ENCODE measurements at regions of chr7 and their contacts with region 1.

Region 1: GRCh38 chr7:27172823-27173510 is 1.2 kb downstream of the HOXA10 start:
- DNase-seq: peak in 1 of 5 donors; percentile 46
- H3K4me3 ChIP-seq: peak overlapping the region; percentile 22
- H3K4me3 Mint-ChIP-seq: peak overlapping the region in 6 of 7 donors; percentile 56 to 86 (median 74)
- H3K27ac ChIP-seq: no peak overlapping the region
- H3K27ac Mint-ChIP-seq: peak overlapping the region in 2 of 8 donors; percentile 60 to 82
- H3K4me1 ChIP-seq: peaks cover 31% of the 10 kb centered on the region
- H3K4me1 Mint-ChIP-seq: peaks cover 19 to 33% (median 22%) of the 10 kb centered on the region in 3 donors
- H3K27me3 ChIP-seq: peaks cover 67% of the 10 kb centered on the region
- H3K27me3 Mint-ChIP-seq: peaks cover 63 to 74% of the 10 kb centered on the region in 2 donors

Region 2: GRCh38 chr7:27112955-27113949 is 59.7 kb before region 1 on chr7:
- CTCF ChIA-PET with region 1: no interaction called
- POLR2A ChIA-PET with region 1: no interaction called
- DNase-seq: no peak
- H3K4me3 ChIP-seq: no peak overlapping the region
- H3K4me3 Mint-ChIP-seq: no peak overlapping the region
- H3K27ac ChIP-seq: no peak overlapping the region
- H3K27ac Mint-ChIP-seq: no peak overlapping the region
- H3K4me1 ChIP-seq: no peaks in the 10 kb centered on the region
- H3K4me1 Mint-ChIP-seq: no peaks in the 10 kb centered on the region
- H3K27me3 ChIP-seq: no peaks in the 10 kb centered on the region
- H3K27me3 Mint-ChIP-seq: peaks cover 13 to 18% of the 10 kb centered on the region in 2 donors

Region 3: DNA sequence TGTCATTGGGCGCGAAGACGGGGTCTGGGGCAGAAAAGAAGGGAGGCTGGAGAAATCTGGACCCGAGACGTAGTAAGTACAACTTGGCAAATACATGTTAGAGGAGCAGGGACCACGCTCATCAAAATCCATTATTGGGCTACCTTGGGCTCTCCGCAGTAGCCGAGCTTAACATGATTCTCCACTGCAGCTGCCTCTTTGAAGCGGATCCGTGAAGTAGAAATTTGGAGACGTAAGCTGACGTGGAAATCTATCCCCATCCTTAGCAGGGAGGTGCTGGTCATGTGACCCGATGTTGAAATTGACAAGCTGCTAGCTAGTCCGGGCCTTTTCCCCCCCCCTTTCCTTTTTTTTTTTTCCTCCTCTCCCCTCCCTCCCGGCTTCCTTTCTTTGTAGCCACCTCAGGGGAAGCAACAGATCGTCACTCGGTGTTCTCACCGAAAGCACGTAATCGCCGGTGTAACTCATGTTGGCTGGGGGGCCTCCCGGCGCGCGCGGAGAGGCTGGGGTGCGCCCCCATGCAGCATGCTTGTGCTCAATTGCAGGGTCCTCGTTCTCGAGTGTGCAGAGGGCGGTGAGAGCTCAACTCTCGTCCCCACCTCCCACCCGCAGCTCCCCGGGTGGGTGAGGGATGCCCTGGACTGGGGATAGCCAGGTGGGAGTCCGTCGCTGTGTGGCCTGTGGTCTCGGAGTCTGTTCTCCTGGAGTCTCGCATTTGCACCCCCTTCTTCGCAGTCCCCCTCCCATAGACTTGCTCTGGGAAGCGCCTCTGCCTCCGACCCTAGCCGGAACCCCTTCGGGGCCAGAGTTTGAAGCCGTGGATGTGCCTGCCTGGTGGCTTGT is 12.3 kb after region 1 on chr7 and contains the start of gene HOXA11:
- CTCF ChIA-PET with region 1: interaction called, 16 read pairs
- POLR2A ChIA-PET with region 1: interaction called, 3 read pairs
- DNase-seq: peak in 1 of 5 donors; percentile 43
- H3K4me3 ChIP-seq: peak within 1 kb of the TSS; percentile 34
- H3K4me3 Mint-ChIP-seq: peak within 1 kb of the TSS; percentile 70 to 89 (median 84)
- H3K27ac ChIP-seq: no peak within 1 kb of the TSS
- H3K27ac Mint-ChIP-seq: peak within 1 kb of the TSS in 6 of 8 donors; percentile 1 to 82 (median 52)
- H3K4me1 ChIP-seq: peaks cover 54% of the 10 kb centered on the region
- H3K4me1 Mint-ChIP-seq: peaks cover 48 to 63% (median 51%) of the 10 kb centered on the region in 3 donors
- H3K27me3 ChIP-seq: peaks cover 82% of the 10 kb centered on the region
- H3K27me3 Mint-ChIP-seq: peaks cover 82 to 88% of the 10 kb centered on the region in 2 donors
- total RNA-seq, gene HOXA11: not detected

Measured in CD8-positive, alpha-beta memory T cell (primary cell).